Dendritic cell treated with granulocyte-macrophage colony-stimulating factor and Interleukin-4, amounts not matched to agents 40 ng/mL and 50 ng/mL, for 4 days (primary cell): ENCODE measurements at regions of chr14 and their contacts with region 1.

Region 1: DNA sequence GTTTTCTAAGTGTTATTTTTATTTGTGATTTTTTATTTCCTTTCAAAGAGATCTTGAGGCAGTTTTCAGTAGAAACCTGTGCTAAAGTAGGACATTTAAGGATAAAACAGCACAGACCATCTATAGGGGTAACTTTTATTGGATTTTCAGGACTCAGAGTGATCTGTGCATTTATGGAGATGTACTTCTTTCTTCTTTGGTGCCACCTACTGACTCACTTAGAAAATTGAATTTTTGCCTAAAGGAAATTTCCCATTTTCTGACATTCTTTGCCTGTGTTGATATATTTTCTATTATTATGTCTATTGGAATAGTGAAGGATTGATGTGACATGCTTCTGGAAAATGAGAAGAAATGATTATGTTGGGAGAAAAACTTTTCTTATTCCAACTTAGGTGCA is 113.0 kb downstream of the UNC79 start:
- H3K4me3 Mint-ChIP-seq: no peak overlapping the region
- H3K27ac Mint-ChIP-seq: no peak overlapping the region
- H3K4me1 Mint-ChIP-seq: peaks cover 15% of the 10 kb centered on the region
- H3K27me3 Mint-ChIP-seq: peaks cover 4% of the 10 kb centered on the region

Region 2: DNA sequence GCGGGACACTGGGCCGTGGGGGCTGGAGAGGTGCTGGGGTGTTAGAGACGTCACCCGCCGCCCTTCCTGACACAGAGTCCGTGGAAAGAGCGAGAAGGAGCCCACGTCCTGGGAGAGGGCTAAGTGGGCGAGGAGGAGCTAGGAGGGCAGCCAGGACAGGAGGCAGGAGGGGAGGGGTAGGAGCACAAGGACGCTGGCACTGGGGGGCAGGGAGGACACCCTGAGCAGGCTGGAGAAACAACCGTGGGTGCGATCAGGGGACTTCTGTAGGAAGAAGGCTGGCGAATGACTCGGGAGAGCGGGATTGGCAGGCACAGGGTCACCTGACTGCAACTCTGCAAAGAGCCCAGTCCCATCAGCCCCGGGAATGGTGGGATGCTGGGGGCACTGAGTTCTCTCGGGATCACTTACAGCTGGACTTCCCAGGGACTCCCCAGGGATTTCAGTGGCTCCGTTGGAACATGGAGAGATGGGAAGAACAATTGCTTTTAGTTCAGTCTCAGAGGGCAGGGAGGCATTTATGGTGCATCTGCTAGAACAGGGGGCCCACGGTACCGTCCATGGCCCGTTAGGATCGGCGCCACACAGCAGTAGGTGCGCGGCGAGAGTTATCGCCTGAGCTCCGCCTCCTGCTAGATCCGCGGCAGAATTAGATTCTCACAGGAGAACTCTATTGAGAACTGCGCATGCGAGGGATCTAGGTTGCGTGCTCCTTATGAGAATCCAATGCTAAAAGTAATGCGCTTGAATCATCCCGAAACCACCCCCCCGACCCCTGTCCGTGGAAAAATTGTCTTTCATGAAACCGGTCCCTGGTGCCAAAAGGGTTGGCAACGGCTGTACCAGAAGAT is 312.4 kb before region 1 on chr14:
- intact Hi-C with region 1: loop called (anchors 5 kb)
- H3K4me3 Mint-ChIP-seq: peak overlapping the region; percentile 50
- H3K27ac Mint-ChIP-seq: no peak overlapping the region
- H3K4me1 Mint-ChIP-seq: peaks cover 10% of the 10 kb centered on the region
- H3K27me3 Mint-ChIP-seq: peaks cover 44% of the 10 kb centered on the region

Region 3: GRCh38 chr14:93332853-93333630 is 210.7 kb before region 1 on chr14 and contains the start of gene BTBD7:
- intact Hi-C with region 1: loop called (anchors 10 kb)
- H3K4me3 Mint-ChIP-seq: peak within 1 kb of the TSS; percentile 85
- H3K27ac Mint-ChIP-seq: peak within 1 kb of the TSS; percentile 93
- H3K4me1 Mint-ChIP-seq: peaks cover 41% of the 10 kb centered on the region
- H3K27me3 Mint-ChIP-seq: no peaks in the 10 kb centered on the region